Common myeloid progenitor, CD34-positive (primary cell): ENCODE measurements at regions of chr3 and their contacts with region 1.

Region 1: GRCh38 chr3:56801662-56802377 is at the start of gene ARHGEF3:
- DNase-seq: peak; percentile 84 to 90 (median 88)
- H3K4me3 ChIP-seq: peak within 1 kb of the TSS; percentile 69 to 96 (median 88)
- H3K27ac ChIP-seq: peak within 1 kb of the TSS in 1 of 2 experiments; percentile 16
- H3K4me1 ChIP-seq: peaks cover 10 to 48% (median 38%) of the 10 kb centered on the region in 4 experiments
- H3K27me3 ChIP-seq: no peaks in the 10 kb centered on the region

Region 2: DNA sequence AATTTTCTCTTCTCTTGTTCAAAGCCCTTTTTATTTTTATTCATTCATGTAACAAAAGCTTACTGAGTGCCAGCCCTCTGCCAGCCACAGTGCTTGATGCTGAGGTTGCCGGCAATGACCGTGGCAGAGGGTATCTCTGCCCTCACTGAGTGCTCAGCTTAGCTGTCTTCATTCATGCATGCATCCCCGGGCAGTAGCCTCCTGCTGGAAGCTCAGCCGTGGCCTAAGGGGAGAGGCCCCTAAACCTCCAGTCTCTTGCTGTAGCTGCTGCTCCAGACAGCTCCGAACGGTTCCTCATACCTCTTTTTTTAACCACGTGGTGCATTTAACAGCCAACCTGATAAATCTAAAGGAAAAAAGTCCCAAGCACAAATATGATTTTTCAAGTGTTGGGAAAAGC is 279.4 kb before region 1 on chr3:
- CTCF ChIA-PET with region 1: no interaction called
- POLR2A ChIA-PET with region 1: no interaction called
- DNase-seq: no peak
- H3K4me3 ChIP-seq: no peak overlapping the region
- H3K27ac ChIP-seq: no peak overlapping the region
- H3K4me1 ChIP-seq: no peaks in the 10 kb centered on the region
- H3K27me3 ChIP-seq: peaks cover 0 to 3% (median 0%) of the 10 kb centered on the region in 5 experiments

Region 3: DNA sequence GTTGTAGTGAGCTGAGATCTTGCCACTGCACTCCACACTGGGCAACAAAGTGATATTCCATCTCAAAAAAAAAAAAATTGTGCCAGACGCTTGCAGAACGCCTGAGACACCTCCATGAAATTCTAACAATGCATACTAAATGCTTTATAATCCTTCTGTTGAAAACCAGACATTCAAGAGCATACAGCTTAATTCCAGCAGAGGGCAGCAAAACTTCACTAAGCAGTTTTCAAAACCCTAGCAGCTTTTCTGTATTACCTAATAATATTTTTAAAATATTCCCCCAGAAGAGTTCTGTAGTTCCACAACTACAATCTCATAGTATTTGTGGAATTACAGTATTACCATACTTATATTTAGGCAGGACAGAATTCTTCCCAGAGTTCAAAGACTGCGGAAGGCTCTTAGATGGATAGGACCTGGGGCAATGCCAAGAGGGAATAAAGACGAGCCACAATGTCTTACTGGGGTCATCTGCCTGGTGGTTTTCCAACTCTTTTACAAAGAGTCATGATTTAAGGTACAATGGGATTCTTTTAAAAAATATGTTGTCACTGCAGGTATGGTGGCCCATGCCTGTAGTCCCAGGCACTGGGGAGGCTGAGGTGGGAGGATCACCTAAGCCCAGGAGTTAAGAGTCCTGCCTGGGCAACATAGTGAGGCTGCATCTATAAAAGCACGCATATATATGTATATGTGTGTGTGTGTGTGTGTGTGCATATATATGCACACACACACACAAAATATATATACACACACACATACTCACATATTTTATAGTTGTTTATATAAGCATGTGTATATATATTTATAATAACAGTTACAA is 99.1 kb before region 1 on chr3:
- CTCF ChIA-PET with region 1: interaction called, 116 read pairs
- POLR2A ChIA-PET with region 1: no interaction called
- DNase-seq: peak; percentile 76 to 90 (median 80)
- H3K4me3 ChIP-seq: no peak overlapping the region
- H3K27ac ChIP-seq: no peak overlapping the region
- H3K4me1 ChIP-seq: no peaks in the 10 kb centered on the region
- H3K27me3 ChIP-seq: no peaks in the 10 kb centered on the region

Region 4: DNA sequence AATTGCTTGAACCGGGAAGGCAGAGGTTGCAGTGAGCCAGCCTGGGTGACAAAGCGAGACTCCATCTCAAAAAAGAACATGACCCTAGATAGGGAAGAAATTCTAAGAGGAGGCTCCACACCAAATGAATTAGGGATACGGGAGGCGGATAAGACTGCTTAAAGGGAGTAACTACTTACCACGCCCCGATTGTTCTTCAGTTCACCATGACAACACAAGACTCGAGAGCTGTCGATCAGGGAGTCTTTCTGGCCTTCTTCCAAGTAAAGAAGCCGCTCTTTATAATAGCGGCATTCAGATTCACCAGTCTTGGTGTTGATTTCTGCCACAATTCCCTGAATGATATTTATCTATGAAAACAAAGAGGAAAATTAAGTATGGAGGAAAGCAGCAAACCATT is 64.8 kb before region 1 on chr3:
- CTCF ChIA-PET with region 1: interaction called, 42 read pairs
- POLR2A ChIA-PET with region 1: interaction called, 6 read pairs
- DNase-seq: no peak
- H3K4me3 ChIP-seq: no peak overlapping the region
- H3K27ac ChIP-seq: no peak overlapping the region
- H3K4me1 ChIP-seq: peaks cover 0 to 3% (median 1%) of the 10 kb centered on the region in 4 experiments
- H3K27me3 ChIP-seq: no peaks in the 10 kb centered on the region

Region 5: GRCh38 chr3:56753206-56753820 is 48.5 kb before region 1 on chr3:
- CTCF ChIA-PET with region 1: interaction called, 110 read pairs
- POLR2A ChIA-PET with region 1: interaction called, 5 read pairs
- DNase-seq: peak in 2 of 3 donors; percentile 52 to 55
- H3K4me3 ChIP-seq: peak overlapping the region in 4 of 7 experiments; percentile 67 to 92 (median 80)
- H3K27ac ChIP-seq: peak overlapping the region in 1 of 2 experiments; percentile 81
- H3K4me1 ChIP-seq: peaks cover 23 to 76% (median 43%) of the 10 kb centered on the region in 4 experiments
- H3K27me3 ChIP-seq: no peaks in the 10 kb centered on the region

Region 6: DNA sequence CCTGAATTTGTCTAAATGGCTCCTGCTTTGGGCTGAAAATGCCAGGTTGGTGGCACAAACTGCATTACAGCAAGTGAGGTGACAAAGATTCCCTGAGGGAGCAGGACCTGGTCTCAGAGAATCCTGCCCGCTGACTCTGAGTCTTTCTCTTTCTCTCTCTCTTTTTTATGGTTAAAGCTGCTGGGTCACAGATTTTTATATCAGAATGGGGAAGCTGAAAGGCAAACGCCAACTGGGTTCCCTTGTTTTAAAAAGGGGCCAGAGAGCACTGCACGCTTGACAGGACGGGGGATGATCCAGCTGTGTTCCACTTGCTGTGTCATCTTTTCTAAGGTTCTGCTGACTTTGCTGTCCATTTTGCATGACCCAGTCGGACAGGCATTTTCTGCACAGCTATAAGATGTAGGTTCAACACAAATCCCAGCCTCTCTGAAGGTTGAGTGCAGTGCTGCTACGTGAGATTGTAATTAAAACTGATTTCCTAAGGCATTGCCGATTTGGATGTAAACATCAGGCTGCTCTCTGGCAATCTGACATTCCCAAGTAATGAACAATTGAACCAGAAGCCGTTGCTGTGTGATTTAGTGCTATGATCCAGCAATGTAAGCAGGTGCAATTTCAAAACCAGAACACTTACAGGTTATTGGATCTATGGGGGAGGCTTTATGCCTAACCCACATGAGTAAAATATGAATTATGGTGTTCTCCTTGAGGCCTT is 25.8 kb before region 1 on chr3:
- CTCF ChIA-PET with region 1: interaction called, 24 read pairs
- POLR2A ChIA-PET with region 1: no interaction called
- DNase-seq: peak in 2 of 3 donors; percentile 51 to 57
- H3K4me3 ChIP-seq: no peak overlapping the region
- H3K27ac ChIP-seq: no peak overlapping the region
- H3K4me1 ChIP-seq: peaks cover 0 to 9% (median 3%) of the 10 kb centered on the region in 4 experiments
- H3K27me3 ChIP-seq: no peaks in the 10 kb centered on the region

Region 7: DNA sequence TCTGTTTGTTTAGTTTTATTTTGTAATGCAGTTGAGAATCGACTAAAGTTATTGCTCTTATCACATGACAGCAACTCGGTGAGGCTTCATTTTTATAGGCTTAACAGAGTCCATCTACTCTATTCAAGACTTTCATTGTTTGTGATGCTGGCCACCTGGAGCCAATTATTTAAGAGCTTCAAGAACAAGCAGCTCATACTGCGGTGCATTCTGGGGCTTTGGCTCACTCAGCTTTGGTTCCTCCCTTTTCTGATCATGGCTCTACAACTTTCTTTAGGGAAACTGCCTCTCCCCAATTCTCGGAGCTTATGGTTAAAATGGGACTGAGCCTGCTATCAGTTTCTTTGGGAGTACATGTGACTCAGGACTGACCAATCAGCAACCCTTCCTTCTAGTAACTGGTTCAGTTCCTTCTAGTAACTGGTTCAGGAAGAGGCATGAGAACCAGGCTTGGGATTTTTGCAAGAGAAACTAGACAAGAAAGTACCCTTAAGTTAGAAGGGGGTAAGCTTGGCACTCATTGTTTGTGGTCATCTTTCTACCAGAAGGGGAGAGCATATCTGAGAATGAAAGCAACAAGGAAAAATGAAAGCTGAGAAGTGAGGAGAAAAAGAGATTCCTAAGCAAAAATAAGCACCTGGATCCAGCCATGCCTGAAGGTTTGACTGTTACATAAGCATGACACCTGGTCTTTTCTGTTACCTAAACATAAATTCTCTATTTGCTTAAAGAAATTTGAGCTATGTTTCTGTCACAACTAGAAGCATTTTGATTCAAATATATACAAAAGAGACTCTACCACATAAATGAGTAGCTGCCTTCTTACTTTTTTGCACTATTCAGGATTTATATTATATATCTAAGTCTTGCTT is 24.0 kb after region 1 on chr3:
- CTCF ChIA-PET with region 1: interaction called, 139 read pairs
- POLR2A ChIA-PET with region 1: no interaction called
- DNase-seq: no peak
- H3K4me3 ChIP-seq: no peak overlapping the region
- H3K27ac ChIP-seq: no peak overlapping the region
- H3K4me1 ChIP-seq: peaks cover 0 to 8% (median 4%) of the 10 kb centered on the region in 4 experiments
- H3K27me3 ChIP-seq: no peaks in the 10 kb centered on the region

Region 8: DNA sequence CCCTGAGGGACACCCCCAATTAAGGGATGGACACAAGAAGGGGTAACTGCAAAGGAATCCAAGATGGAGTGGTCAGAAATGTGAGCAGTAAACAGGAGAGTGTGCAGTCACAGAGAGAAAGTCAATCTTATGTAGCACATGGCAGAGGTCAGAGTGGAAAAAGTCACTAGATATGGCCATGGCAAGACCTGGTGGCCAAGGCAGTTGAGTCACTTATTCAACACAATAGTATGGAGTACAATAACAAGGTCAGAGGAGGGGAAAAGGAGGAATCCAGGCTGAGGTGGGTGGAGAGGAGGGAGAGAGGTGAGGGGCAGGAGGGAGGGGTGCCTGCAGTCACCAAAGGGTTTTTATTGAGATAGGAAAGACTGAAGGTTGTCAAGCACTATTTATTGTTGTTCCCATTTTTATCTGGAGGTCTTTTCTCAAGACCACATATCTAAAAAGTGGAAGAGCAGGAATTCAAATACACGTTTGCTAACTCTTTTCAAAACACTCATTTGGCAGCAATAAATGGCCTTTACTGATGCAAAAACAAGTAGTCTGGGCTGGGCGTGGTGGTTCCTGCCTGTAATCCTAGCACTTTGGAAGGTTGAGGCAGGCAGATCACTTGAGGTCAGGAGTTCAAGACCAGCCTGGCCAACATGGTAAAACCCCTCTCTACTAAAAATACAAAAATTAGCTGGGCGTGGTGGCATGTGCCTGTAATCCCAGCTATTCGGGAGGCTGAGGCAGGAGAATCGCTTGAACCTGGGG is 53.2 kb after region 1 on chr3:
- CTCF ChIA-PET with region 1: no interaction called
- POLR2A ChIA-PET with region 1: no interaction called
- DNase-seq: no peak
- H3K4me3 ChIP-seq: no peak overlapping the region
- H3K27ac ChIP-seq: no peak overlapping the region
- H3K4me1 ChIP-seq: peaks cover 0 to 12% (median 0%) of the 10 kb centered on the region in 4 experiments
- H3K27me3 ChIP-seq: no peaks in the 10 kb centered on the region

Region 9: DNA sequence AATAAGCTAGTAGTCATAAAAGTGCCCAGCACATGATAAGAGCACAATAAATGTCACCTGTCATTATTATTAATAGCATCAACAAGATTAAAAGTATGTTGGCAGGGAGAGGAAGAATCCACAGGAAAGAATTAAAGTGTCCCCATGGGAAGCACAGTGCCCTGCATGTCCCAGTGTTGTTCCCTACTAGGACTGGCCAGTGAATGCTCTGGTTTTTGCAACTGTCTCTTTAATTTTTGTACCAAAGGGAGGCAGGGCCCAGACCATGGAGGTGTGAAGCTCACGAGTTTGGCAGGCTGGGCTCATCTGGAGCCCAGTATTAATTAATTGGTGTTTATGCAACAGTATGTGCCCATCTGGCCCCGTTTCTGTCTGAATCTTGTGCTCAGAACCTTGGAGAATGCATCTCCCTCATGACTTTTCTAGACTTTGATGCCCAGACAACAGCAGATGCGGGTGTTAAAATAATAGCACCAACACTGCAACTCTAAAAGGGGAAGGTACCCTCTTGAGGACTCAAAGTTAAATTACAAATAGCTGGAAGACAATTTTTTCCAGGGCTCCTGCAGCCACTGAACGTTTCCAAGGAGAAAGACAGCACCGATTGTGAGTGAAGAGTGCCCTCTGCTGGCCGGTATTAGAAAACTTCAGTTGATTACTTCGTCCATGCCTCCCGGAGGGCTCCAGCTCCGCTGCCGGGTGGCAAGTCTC is 186.8 kb after region 1 on chr3:
- CTCF ChIA-PET with region 1: interaction called, 79 read pairs
- POLR2A ChIA-PET with region 1: no interaction called
- DNase-seq: peak; percentile 70 to 79 (median 71)
- H3K4me3 ChIP-seq: no peak overlapping the region
- H3K27ac ChIP-seq: no peak overlapping the region
- H3K4me1 ChIP-seq: peaks cover 0 to 21% (median 12%) of the 10 kb centered on the region in 4 experiments
- H3K27me3 ChIP-seq: no peaks in the 10 kb centered on the region